Transverse colon (tissue), 4 donors: ENCODE measurements at regions of chr14 and their contacts with region 1.

Region 1: GRCh38 chr14:49852301-49853157 is at the start of gene NEMF:
- DNase-seq: peak; percentile 88
- H3K4me3 ChIP-seq: peak within 1 kb of the TSS; percentile 61 to 91 (median 72)
- H3K27ac ChIP-seq: peak within 1 kb of the TSS; percentile 91 to 94 (median 93)
- H3K4me1 ChIP-seq: peaks cover 16 to 40% (median 17%) of the 10 kb centered on the region in 4 donors
- H3K27me3 ChIP-seq: no peaks in the 10 kb centered on the region
- CTCF ChIP-seq: peak; percentile 73 to 97 (median 80)
- EP300 ChIP-seq: no peak
- POLR2A ChIP-seq: peak; percentile 89
- total RNA-seq, gene NEMF: 50.2 to 129 (median 79.3) TPM

Region 2: GRCh38 chr14:50109342-50109741 is 256.8 kb after region 1 on chr14:
- in situ Hi-C with region 1: loop called in 1 of 4 experiments (anchors 10 kb)
- intact Hi-C with region 1: no loop called
- DNase-seq: no peak
- H3K4me3 ChIP-seq: no peak overlapping the region
- H3K27ac ChIP-seq: no peak overlapping the region
- H3K4me1 ChIP-seq: peaks cover 0 to 8% (median 4%) of the 10 kb centered on the region in 4 donors
- H3K27me3 ChIP-seq: no peaks in the 10 kb centered on the region
- CTCF ChIP-seq: no peak
- EP300 ChIP-seq: no peak
- POLR2A ChIP-seq: no peak